ENCODE measurements at regions of chr17 and their contacts with region 1.

Region 1: DNA sequence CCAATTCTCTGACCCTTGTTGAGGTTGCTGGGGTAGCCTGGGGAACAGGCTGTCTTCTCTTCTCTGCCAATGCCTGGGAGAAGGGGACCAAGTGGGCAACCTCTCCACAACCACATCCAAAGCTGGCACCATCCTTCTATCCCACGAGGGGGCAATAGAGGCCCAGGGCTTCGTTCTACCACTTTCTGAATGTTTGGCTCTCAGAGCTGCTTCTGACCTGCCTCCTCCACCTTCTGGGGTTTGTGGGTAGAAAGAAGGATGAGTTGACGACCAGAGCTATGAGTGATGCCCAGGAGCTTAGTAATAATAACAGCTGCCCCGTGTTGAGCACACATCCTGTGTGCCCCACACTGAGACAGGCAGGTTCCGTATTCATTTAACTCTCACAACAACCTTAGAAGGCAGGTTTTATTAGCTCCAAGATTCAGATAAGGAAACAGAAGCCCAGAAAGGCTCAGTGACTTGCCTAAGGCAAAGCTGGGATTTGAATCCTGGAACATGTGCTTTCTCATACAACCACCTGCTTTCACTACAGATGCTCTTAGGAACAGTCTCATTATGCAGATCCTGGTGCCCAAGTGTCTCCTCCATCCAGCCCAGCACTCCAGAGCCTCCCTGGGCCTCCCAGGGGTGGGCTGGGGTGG is 11.1 kb downstream of the TSPOAP1 start:
- DNase-seq: peak; percentile 89
- ATAC-seq: peak; percentile 98
- H3K4me3 Mint-ChIP-seq: peak overlapping the region; percentile 20
- H3K27ac Mint-ChIP-seq: peak overlapping the region; percentile 90
- H3K4me1 Mint-ChIP-seq: peaks cover 15% of the 10 kb centered on the region
- H3K27me3 Mint-ChIP-seq: no peaks in the 10 kb centered on the region
- CTCF ChIP-seq: peak; percentile 78

Region 2: GRCh38 chr17:58210922-58211321 is 106.6 kb before region 1 on chr17:
- CTCF ChIA-PET with region 1: no interaction called
- POLR2A ChIA-PET with region 1: no interaction called
- intact Hi-C with region 1: no loop called
- DNase-seq: no peak
- ATAC-seq: no peak
- H3K4me3 Mint-ChIP-seq: no peak overlapping the region
- H3K27ac Mint-ChIP-seq: no peak overlapping the region
- H3K4me1 Mint-ChIP-seq: no peaks in the 10 kb centered on the region
- H3K27me3 Mint-ChIP-seq: no peaks in the 10 kb centered on the region
- CTCF ChIP-seq: no peak

Region 3: DNA sequence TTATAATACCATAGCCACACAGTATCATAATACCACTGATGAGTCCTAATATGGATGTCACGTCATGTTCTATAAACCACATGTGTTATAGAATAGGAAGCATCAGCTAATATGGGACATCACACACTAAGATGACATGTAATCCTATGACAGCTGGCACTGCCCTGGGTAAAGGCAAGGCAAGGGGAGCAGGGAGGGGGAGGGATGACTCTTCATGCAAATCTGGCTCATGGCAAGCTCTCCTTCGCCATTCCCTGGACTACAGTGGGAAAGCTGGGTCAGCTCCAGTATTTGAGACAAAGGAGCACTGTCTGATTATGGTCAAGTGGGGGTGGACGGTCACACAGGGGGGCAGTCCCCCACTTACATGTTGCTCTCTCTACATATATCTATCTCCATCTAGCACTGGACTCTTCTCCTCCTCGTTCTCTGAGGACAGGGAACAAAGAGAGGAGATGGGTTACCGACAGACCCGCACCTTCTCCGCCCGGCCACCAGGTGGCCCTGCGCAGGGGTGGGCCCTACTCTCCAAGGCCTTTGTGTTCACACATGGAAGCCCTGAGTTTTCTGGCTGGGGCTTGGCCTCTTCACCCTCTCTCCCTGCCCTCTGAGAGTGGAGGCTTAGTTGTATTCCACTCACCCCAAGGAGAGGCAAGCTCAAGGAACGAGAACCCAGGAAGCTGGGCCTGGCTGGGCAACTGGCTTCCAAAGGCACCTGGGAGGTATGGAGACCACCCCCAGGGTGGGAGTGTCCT is 13.4 kb before region 1 on chr17:
- CTCF ChIA-PET with region 1: interaction called, 45 read pairs
- POLR2A ChIA-PET with region 1: interaction called, 8 read pairs
- intact Hi-C with region 1: no loop called
- DNase-seq: peak; percentile 66
- ATAC-seq: peak; percentile 99
- H3K4me3 Mint-ChIP-seq: no peak overlapping the region
- H3K27ac Mint-ChIP-seq: no peak overlapping the region
- H3K4me1 Mint-ChIP-seq: peaks cover 2% of the 10 kb centered on the region
- H3K27me3 Mint-ChIP-seq: no peaks in the 10 kb centered on the region
- CTCF ChIP-seq: peak; percentile 89

Region 4: GRCh38 chr17:58344047-58344790 is 26.7 kb after region 1 on chr17:
- CTCF ChIA-PET with region 1: interaction called, 161 read pairs
- POLR2A ChIA-PET with region 1: interaction called, 1,558 read pairs
- intact Hi-C with region 1: no loop called
- DNase-seq: peak; percentile 98
- ATAC-seq: peak; percentile 78
- H3K4me3 Mint-ChIP-seq: peak overlapping the region; percentile 81
- H3K27ac Mint-ChIP-seq: peak overlapping the region; percentile 96
- H3K4me1 Mint-ChIP-seq: peaks cover 53% of the 10 kb centered on the region
- H3K27me3 Mint-ChIP-seq: no peaks in the 10 kb centered on the region
- CTCF ChIP-seq: no peak

Region 5: DNA sequence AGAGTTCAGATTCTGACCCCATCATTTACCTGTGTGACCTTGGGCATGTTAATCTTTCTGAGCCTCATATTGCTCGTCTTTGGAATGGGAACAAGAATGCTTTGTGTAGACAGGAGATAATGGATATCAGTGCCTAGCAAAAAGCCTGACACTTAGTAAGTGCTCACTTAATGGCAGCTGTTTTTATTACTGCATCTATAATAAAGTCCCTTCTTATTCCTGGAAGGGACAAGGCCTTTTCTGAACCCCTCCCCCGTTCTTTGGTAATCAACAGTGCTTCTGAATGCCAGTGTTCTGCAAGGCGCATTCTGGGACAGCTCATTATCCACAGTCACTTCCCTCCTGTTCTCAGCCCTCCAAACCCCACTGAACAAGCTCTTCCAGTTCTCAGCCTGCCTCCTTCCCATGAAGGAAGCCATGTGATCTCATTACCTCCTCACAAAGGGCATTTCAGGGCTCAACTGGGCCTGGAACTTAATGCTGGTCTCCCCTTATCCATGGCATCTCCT is 59.6 kb after region 1 on chr17:
- CTCF ChIA-PET with region 1: interaction called, 20 read pairs
- POLR2A ChIA-PET with region 1: interaction called, 3 read pairs
- intact Hi-C with region 1: no loop called
- DNase-seq: no peak
- ATAC-seq: no peak
- H3K4me3 Mint-ChIP-seq: no peak overlapping the region
- H3K27ac Mint-ChIP-seq: no peak overlapping the region
- H3K4me1 Mint-ChIP-seq: peaks cover 30% of the 10 kb centered on the region
- H3K27me3 Mint-ChIP-seq: no peaks in the 10 kb centered on the region
- CTCF ChIP-seq: no peak

Region 6: GRCh38 chr17:58447039-58447975 is 129.8 kb after region 1 on chr17:
- CTCF ChIA-PET with region 1: interaction called, 20 read pairs
- POLR2A ChIA-PET with region 1: interaction called, 4 read pairs
- intact Hi-C with region 1: loop called (anchors 5 kb)
- DNase-seq: peak; percentile 84
- ATAC-seq: peak; percentile 91
- H3K4me3 Mint-ChIP-seq: no peak overlapping the region
- H3K27ac Mint-ChIP-seq: no peak overlapping the region
- H3K4me1 Mint-ChIP-seq: peaks cover 3% of the 10 kb centered on the region
- H3K27me3 Mint-ChIP-seq: no peaks in the 10 kb centered on the region
- CTCF ChIP-seq: peak; percentile 68